ENCODE measurements at regions of chrX and their contacts with region 1.

Region 1: DNA sequence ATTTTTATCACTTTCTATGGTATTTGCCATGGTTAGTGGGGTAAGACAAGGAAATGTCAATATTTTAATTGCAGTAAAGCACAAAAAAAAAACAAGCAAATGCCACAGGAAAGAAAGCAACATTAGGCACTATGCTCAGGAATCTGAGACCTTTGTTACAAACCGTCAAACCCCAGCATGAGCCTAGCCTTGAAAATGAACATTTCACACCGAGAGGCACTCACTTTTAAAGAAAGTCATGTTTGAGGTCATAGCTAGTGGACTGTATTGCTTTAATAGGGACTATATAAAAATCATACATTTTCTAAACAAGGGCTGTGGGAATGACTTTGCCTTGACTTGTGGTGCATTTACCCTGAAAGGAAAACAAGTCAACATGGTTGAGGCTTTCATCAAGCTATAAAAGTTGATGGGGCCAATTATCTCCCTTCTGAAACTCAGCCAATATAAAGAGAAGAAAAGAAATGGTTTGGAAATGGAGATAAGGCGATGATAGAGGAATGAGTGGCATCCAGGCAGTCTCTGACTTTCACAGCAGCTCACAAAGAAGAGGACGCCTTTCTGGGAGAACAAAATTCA is 118.8 kb downstream of the SMARCA1 start:
- DNase-seq: peak in 1 of 2 experiments; percentile 12
- H3K4me3 ChIP-seq: no peak overlapping the region
- H3K4me3 Mint-ChIP-seq: peak overlapping the region; percentile 38
- H3K27ac Mint-ChIP-seq: peak overlapping the region; percentile 53
- H3K4me1 ChIP-seq: peaks cover 11% of the 10 kb centered on the region
- H3K4me1 Mint-ChIP-seq: peaks cover 14% of the 10 kb centered on the region
- H3K27me3 ChIP-seq: no peaks in the 10 kb centered on the region
- H3K27me3 Mint-ChIP-seq: no peaks in the 10 kb centered on the region
- CTCF ChIP-seq: no peak

Region 2: GRCh38 chrX:128781493-128781892 is 623.0 kb before region 1 on chrX:
- CTCF ChIA-PET with region 1: no interaction called
- POLR2A ChIA-PET with region 1: no interaction called
- intact Hi-C with region 1: no loop called
- DNase-seq: peak; percentile 32 to 51
- H3K4me3 ChIP-seq: no peak overlapping the region
- H3K4me3 Mint-ChIP-seq: no peak overlapping the region
- H3K27ac Mint-ChIP-seq: no peak overlapping the region
- H3K4me1 ChIP-seq: no peaks in the 10 kb centered on the region
- H3K4me1 Mint-ChIP-seq: no peaks in the 10 kb centered on the region
- H3K27me3 ChIP-seq: no peaks in the 10 kb centered on the region
- H3K27me3 Mint-ChIP-seq: no peaks in the 10 kb centered on the region
- CTCF ChIP-seq: peak; percentile 28

Region 3: DNA sequence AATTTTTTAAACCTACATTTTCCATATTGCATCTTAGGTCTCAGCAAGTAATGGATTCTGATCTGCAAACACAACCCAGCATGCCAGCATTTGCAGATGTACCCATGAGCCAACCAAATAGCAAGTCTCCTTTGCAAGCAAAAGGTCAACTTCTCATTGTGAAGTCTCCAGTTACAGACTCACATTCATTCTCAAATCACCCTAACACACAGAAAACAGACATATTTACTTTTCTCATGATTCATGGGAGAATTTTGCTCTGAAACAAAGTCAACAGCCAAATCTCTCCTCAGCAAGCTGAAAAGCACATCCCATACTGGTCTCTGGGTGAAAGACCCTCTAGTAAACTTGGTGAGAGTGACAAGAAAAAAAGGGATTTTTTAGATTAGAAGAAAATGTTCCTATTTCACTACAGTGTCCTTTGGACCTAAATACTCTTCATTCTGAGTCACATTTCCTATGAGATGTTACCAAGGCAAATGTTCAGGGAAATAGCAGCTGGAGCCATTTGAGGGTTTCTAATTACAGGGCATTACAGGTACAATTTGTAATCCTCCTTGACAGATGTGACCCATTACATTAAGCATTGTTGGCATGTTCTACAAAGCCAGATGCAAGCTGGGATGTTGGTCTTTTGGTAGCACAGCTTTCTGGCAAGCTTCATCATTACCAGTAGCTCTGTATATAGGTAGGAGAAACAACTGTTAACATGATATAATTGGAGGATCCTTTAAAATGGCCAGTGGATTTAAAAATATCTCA is 264.5 kb before region 1 on chrX:
- CTCF ChIA-PET with region 1: no interaction called
- POLR2A ChIA-PET with region 1: no interaction called
- intact Hi-C with region 1: loop called (anchors 1 kb)
- DNase-seq: no peak
- H3K4me3 ChIP-seq: no peak overlapping the region
- H3K4me3 Mint-ChIP-seq: no peak overlapping the region
- H3K27ac Mint-ChIP-seq: no peak overlapping the region
- H3K4me1 ChIP-seq: peaks cover 16% of the 10 kb centered on the region
- H3K4me1 Mint-ChIP-seq: peaks cover 10% of the 10 kb centered on the region
- H3K27me3 ChIP-seq: no peaks in the 10 kb centered on the region
- H3K27me3 Mint-ChIP-seq: no peaks in the 10 kb centered on the region
- CTCF ChIP-seq: no peak

Region 4: GRCh38 chrX:129445436-129445835 is 40.9 kb after region 1 on chrX:
- CTCF ChIA-PET with region 1: no interaction called
- POLR2A ChIA-PET with region 1: no interaction called
- intact Hi-C with region 1: loop called (anchors 1 kb)
- DNase-seq: no peak
- H3K4me3 ChIP-seq: no peak overlapping the region
- H3K4me3 Mint-ChIP-seq: no peak overlapping the region
- H3K27ac Mint-ChIP-seq: no peak overlapping the region
- H3K4me1 ChIP-seq: peaks cover 10% of the 10 kb centered on the region
- H3K4me1 Mint-ChIP-seq: peaks cover 9% of the 10 kb centered on the region
- H3K27me3 ChIP-seq: no peaks in the 10 kb centered on the region
- H3K27me3 Mint-ChIP-seq: no peaks in the 10 kb centered on the region
- CTCF ChIP-seq: no peak

Region 5: GRCh38 chrX:129462707-129463106 is 58.2 kb after region 1 on chrX:
- CTCF ChIA-PET with region 1: interaction called, 4 read pairs
- POLR2A ChIA-PET with region 1: no interaction called
- intact Hi-C with region 1: loop called (anchors 5 kb)
- DNase-seq: no peak
- H3K4me3 ChIP-seq: no peak overlapping the region
- H3K4me3 Mint-ChIP-seq: no peak overlapping the region
- H3K27ac Mint-ChIP-seq: no peak overlapping the region
- H3K4me1 ChIP-seq: no peaks in the 10 kb centered on the region
- H3K4me1 Mint-ChIP-seq: no peaks in the 10 kb centered on the region
- H3K27me3 ChIP-seq: no peaks in the 10 kb centered on the region
- H3K27me3 Mint-ChIP-seq: no peaks in the 10 kb centered on the region
- CTCF ChIP-seq: no peak

Measured in Caco-2 (cell line).